ENCODE measurements at regions of chr3 and their contacts with region 1.

Region 1: DNA sequence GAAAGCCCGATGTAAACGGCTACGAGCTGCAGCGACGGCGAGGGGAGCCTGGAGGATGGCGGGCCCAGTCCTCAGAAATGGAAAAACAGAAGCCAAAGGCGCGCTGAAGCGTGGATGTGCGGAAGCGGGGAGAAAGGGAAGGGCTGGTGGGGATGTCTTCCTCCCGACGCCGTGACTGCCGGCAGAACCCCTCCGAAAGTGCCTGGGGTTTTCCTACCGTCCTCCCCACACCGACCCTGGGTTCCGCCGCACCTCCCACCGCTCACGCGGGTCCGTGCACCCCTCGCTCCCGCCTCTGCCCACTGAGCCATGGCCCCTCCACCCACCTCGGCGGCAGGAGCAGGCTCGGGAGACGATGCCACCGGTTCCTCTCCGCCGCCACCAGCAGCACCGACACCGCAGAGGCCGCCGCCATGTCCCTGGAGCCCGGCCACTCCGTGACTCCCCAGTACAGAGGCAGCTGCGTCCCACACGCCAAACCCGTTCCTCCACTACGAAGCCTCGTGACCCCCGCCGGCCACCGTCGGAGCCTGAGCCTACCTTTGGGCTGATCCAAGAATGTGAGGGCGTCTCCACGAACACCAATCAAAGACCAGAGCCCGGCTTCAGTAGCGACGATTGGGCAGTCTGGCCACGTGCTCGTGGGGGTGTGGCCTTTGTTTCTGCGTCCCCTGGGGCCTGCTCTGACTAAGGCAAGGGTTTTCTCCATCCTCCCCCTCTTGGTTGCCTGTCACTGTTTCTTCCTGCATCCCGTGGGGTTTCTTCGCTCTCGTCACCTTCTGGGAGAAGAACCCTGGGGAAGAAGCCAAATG is at the start of gene MCCC1:
- DNase-seq: peak; percentile 98 to 100 (median 99)

Region 2: GRCh38 chr3:182792901-182793662 is 306.1 kb before region 1 on chr3 and contains the start of gene ATP11B:
- intact Hi-C with region 1: loop called (anchors 5 kb)
- DNase-seq: peak; percentile 51 to 96 (median 72)

Region 3: GRCh38 chr3:182909318-182910040 is 189.8 kb before region 1 on chr3:
- intact Hi-C with region 1: loop called (anchors 10 kb)
- DNase-seq: peak in 4 of 10 donors; percentile 22 to 67 (median 44)

Region 4: DNA sequence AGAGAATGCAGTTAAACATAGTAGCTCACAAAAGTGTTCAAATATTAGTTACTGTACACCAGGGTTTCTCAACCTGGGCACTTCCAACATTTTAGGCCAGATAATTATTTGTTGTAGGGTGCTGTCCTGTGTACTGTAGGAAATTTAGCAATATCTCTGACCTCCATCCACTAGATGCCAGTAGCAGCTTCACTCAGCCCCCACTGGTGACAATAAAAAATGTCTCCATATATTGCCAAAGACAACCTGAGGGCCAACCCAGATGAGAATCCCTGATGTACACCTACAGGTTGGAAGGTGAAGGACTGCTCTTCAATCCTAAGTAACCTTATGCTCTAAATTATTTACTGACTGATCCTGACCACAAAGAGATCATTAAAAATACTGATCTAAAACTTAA is 151.3 kb before region 1 on chr3:
- intact Hi-C with region 1: no loop called
- DNase-seq: no peak

Region 5: GRCh38 chr3:182980204-182981037 is 118.8 kb before region 1 on chr3 and contains the start of gene DCUN1D1:
- intact Hi-C with region 1: loop called (anchors 5 kb)
- DNase-seq: peak; percentile 81 to 98 (median 90)

Region 6: GRCh38 chr3:183253902-183254833 is 154.9 kb after region 1 on chr3:
- intact Hi-C with region 1: no loop called
- DNase-seq: peak in 3 of 10 donors; percentile 23 to 85 (median 83)